CD4-positive, alpha-beta T cell (primary cell): ENCODE measurements at regions of chr15 and their contacts with region 1.

Region 1: DNA sequence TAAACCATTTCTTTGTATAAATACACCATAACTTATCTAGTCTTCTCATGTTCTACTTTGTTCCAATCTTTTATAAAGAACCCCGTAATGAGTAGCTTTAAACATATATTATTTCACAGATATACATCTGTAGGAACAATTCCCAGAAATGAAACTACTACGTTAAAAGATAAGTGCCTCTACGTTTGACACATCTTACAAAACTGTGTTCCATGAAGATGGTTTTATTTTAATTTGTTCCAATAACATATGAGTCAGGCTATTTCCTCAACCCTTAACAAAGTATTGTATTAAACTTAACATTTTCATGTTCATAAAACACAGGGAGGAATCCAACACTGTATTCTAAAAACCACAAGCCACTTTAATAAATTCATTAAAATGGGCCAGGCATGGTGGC is 52.9 kb downstream of the TRPM7 start:
- DNase-seq: no peak
- ATAC-seq: no peak
- H3K4me3 ChIP-seq: no peak overlapping the region
- H3K4me3 Mint-ChIP-seq: no peak overlapping the region
- H3K27ac ChIP-seq: no peak overlapping the region
- H3K27ac Mint-ChIP-seq: no peak overlapping the region
- H3K4me1 ChIP-seq: no peaks in the 10 kb centered on the region
- H3K4me1 Mint-ChIP-seq: no peaks in the 10 kb centered on the region
- H3K27me3 ChIP-seq: no peaks in the 10 kb centered on the region
- H3K27me3 Mint-ChIP-seq: no peaks in the 10 kb centered on the region
- CTCF ChIP-seq: no peak

Region 2: GRCh38 chr15:49989498-49989897 is 644.2 kb before region 1 on chr15:
- CTCF ChIA-PET with region 1: no interaction called
- POLR2A ChIA-PET with region 1: no interaction called
- intact Hi-C with region 1: no loop called
- DNase-seq: no peak
- ATAC-seq: no peak
- H3K4me3 ChIP-seq: no peak overlapping the region
- H3K4me3 Mint-ChIP-seq: no peak overlapping the region
- H3K27ac ChIP-seq: no peak overlapping the region
- H3K27ac Mint-ChIP-seq: no peak overlapping the region
- H3K4me1 ChIP-seq: no peaks in the 10 kb centered on the region
- H3K4me1 Mint-ChIP-seq: no peaks in the 10 kb centered on the region
- H3K27me3 ChIP-seq: no peaks in the 10 kb centered on the region
- H3K27me3 Mint-ChIP-seq: no peaks in the 10 kb centered on the region
- CTCF ChIP-seq: no peak

Region 3: DNA sequence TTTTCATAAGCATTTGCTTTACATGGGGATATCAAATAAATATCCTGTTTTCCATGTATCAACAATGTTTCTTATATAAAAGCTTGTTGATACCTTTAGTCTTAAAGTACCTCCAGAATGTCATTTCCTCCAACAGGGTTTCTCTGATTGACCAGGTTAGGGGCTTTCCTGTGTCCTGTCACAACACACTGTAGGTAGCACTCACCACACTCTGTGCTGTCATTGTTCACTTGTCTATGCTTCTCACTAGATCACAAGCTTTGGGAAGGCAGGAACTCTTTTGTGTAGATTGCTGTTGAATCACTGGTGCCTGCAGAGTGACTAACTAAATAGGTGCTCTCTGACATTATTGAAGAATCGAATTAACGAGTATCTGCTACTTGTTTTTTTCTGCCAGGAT is 137.0 kb before region 1 on chr15:
- CTCF ChIA-PET with region 1: no interaction called
- POLR2A ChIA-PET with region 1: no interaction called
- intact Hi-C with region 1: loop called in 1 of 2 experiments (anchors 10 kb)
- DNase-seq: no peak
- ATAC-seq: no peak
- H3K4me3 ChIP-seq: no peak overlapping the region
- H3K4me3 Mint-ChIP-seq: no peak overlapping the region
- H3K27ac ChIP-seq: no peak overlapping the region
- H3K27ac Mint-ChIP-seq: no peak overlapping the region
- H3K4me1 ChIP-seq: no peaks in the 10 kb centered on the region
- H3K4me1 Mint-ChIP-seq: no peaks in the 10 kb centered on the region
- H3K27me3 ChIP-seq: no peaks in the 10 kb centered on the region
- H3K27me3 Mint-ChIP-seq: no peaks in the 10 kb centered on the region
- CTCF ChIP-seq: no peak

Region 4: DNA sequence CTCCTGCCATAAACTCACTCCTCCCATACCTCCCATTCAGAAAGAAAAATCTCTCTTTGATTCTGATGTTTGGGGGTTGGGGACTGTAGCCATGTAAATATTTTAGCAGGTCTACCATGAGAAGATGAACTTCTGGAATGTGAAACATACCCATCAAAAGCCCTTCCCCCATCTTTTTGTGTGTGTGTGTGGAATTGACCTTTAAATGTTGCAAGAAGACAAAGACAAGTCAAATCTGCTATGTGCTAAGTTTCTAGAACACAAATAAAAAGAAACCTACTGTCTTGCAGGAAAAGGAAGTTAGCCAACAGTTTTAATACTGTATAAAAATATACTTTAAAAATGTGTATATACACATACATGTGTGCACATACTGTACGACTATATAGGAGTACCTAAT is 57.5 kb before region 1 on chr15:
- CTCF ChIA-PET with region 1: no interaction called
- POLR2A ChIA-PET with region 1: no interaction called
- intact Hi-C with region 1: loop called in 1 of 2 experiments (anchors 10 kb)
- DNase-seq: no peak
- ATAC-seq: no peak
- H3K4me3 ChIP-seq: no peak overlapping the region
- H3K4me3 Mint-ChIP-seq: no peak overlapping the region
- H3K27ac ChIP-seq: no peak overlapping the region
- H3K27ac Mint-ChIP-seq: no peak overlapping the region
- H3K4me1 ChIP-seq: no peaks in the 10 kb centered on the region
- H3K4me1 Mint-ChIP-seq: no peaks in the 10 kb centered on the region
- H3K27me3 ChIP-seq: no peaks in the 10 kb centered on the region
- H3K27me3 Mint-ChIP-seq: no peaks in the 10 kb centered on the region
- CTCF ChIP-seq: no peak